Heart left ventricle (tissue), 16 donors: ENCODE measurements at regions of chr6 and their contacts with region 1.

Region 1: DNA sequence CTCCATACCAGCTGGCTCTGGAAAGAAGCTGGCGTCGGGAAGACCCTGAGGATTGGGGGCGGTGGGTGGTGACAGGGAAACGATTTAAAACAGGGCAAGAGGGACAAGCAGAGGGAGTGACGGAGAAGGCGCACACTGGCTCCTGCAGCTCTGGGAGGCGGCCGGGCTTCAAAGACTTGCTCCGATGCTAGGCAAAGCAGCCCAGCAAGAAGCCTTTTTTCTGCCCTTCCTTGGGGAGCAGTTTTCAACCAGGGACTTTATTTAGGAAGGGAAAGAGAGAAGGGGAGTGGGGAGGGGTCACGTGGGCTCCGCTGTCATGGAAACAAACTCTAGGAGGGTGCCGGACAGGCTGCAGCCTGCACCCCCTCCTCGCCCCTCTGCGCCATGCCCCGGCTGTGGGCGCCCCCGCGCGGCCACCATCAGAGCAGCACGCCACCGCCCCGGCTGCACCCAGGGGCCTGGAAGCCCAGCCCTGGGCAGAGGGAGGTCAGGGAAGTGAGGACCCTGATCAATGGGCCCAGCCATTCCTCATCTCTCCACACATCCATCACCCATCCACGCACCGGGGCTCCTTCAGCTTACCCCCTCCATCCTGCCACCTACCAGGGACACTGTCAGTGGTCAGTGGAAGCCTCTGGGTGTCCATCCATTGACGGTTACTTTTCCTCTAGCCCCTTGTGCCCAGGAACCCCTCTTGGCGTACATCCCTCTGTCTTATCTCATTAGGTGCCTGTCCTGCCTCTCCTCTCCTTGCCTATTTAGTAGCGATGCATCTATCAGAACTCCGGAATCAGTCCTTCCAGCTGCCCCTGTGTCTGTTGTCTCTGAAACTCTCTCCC is 66.6 kb upstream of the CCDC167 start:
- DNase-seq: peak in 4 of 5 donors; percentile 36 to 78 (median 54)
- ATAC-seq: peak; percentile 37 to 88 (median 77)
- H3K4me3 ChIP-seq: peak overlapping the region; percentile 21 to 54 (median 43)
- H3K27ac ChIP-seq: peak overlapping the region in 1 of 12 donors; percentile 18
- H3K4me1 ChIP-seq: peaks cover 0 to 21% (median 11%) of the 10 kb centered on the region in 12 donors
- H3K27me3 ChIP-seq: peaks cover 0 to 26% (median 8%) of the 10 kb centered on the region in 9 donors
- CTCF ChIP-seq: peak; percentile 73 to 92 (median 81)
- POLR2A ChIP-seq: no peak

Region 2: GRCh38 chr6:37365762-37366161 is 200.6 kb before region 1 on chr6:
- intact Hi-C with region 1: loop called in 2 of 10 experiments (anchors 5 kb)
- DNase-seq: no peak
- ATAC-seq: peak; percentile 48 to 62 (median 56)
- H3K4me3 ChIP-seq: no peak overlapping the region
- H3K27ac ChIP-seq: no peak overlapping the region
- H3K4me1 ChIP-seq: peaks cover 0 to 40% (median 26%) of the 10 kb centered on the region in 12 donors
- H3K27me3 ChIP-seq: no peaks in the 10 kb centered on the region
- CTCF ChIP-seq: peak in 9 of 12 donors; percentile 17 to 53 (median 41)
- POLR2A ChIP-seq: no peak

Region 3: DNA sequence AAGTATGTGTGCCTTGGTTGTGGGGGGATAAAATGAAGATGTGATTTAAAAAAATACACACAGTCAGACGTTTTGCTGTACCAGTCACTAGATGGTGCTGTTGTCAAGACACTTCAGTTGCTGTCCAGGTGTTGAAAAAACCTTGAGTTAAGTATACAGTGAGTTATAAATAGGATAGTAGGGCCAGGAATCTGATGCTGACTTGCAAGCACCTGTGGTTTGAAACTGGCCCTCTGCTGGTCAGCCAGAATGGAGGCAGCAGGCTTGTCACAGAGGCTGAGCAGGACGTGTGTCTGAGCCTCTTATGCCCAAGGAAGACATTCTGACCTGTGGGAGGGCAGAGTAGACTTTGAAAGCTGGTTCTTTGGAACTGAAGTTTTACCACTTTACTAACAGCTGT is 184.8 kb before region 1 on chr6:
- intact Hi-C with region 1: loop called in 8 of 10 experiments (anchors 1 to 10 kb)
- DNase-seq: no peak
- ATAC-seq: peak in 3 of 4 donors; percentile 45 to 62 (median 53)
- H3K4me3 ChIP-seq: no peak overlapping the region
- H3K27ac ChIP-seq: no peak overlapping the region
- H3K4me1 ChIP-seq: no peaks in the 10 kb centered on the region
- H3K27me3 ChIP-seq: no peaks in the 10 kb centered on the region
- CTCF ChIP-seq: peak; percentile 38 to 68 (median 54)
- POLR2A ChIP-seq: no peak

Region 4: DNA sequence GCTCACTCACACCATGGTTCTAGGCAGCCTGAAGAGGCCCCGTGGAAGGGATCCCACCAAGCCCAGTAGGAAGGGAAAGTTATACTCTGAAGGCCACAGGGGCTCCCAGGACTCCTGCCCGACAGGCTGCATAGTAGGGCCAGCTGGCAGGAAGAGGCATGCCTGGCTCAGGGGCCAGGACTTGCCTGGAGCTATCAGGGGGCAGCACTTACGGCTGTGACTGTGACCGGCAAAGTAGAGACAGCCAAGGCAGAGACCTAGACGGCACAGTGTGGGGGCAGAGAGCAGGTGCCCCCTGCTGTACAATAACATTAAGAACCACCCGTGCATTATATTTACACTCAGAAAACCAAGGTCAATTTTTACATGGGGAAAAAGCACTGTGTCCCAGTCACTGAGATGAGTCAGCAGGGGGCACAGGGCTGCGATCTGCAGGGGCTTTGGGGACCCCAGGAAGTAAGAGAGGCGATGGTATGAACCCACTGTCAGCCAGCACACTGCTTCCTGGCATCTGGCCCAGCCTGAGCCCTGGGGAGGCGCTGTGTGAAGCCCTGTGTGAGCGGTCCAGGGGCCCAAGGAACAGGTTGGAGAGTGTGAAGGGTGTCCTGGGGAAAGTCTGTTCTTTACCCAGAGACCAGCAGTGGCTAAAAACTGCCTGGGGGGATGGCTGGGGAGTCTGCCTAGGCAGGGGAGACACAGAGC is 76.5 kb before region 1 on chr6:
- intact Hi-C with region 1: loop called in 6 of 10 experiments (anchors 2 to 10 kb)
- DNase-seq: peak in 1 of 5 donors; percentile 65
- ATAC-seq: peak; percentile 41 to 61 (median 54)
- H3K4me3 ChIP-seq: no peak overlapping the region
- H3K27ac ChIP-seq: peak overlapping the region in 2 of 12 donors; percentile 3 to 29
- H3K4me1 ChIP-seq: peaks cover 0 to 37% (median 25%) of the 10 kb centered on the region in 12 donors
- H3K27me3 ChIP-seq: no peaks in the 10 kb centered on the region
- CTCF ChIP-seq: peak in 7 of 12 donors; percentile 8 to 32 (median 24)
- POLR2A ChIP-seq: no peak